ENCODE measurements at regions of chr11 and their contacts with region 1.

Region 1: GRCh38 chr11:86182976-86183584 is 61.5 kb upstream of the EED start:
- DNase-seq: peak; percentile 88
- ATAC-seq: peak; percentile 92
- H3K4me3 ChIP-seq: no peak overlapping the region
- H3K27ac ChIP-seq: no peak overlapping the region
- H3K4me1 ChIP-seq: peaks cover 12% of the 10 kb centered on the region
- H3K27me3 ChIP-seq: no peaks in the 10 kb centered on the region
- CTCF ChIP-seq: no peak
- EP300 ChIP-seq: peak in 1 of 2 experiments; percentile 9; a peak in 1 of 4 replicates
- POLR2A ChIP-seq: no peak
- RAD21 ChIP-seq: no peak

Region 2: GRCh38 chr11:86079421-86079820 is 103.7 kb before region 1 on chr11:
- CTCF ChIA-PET with region 1: no interaction called
- POLR2A ChIA-PET with region 1: no interaction called
- RAD21 ChIA-PET with region 1: no interaction called
- SMC1A ChIA-PET with region 1: no interaction called
- in situ Hi-C with region 1: no loop called
- intact Hi-C with region 1: no loop called
- DNase-seq: no peak
- ATAC-seq: no peak
- H3K4me3 ChIP-seq: no peak overlapping the region
- H3K27ac ChIP-seq: no peak overlapping the region
- H3K4me1 ChIP-seq: no peaks in the 10 kb centered on the region
- H3K27me3 ChIP-seq: no peaks in the 10 kb centered on the region
- CTCF ChIP-seq: no peak
- EP300 ChIP-seq: no peak
- POLR2A ChIP-seq: no peak
- RAD21 ChIP-seq: no peak

Region 3: GRCh38 chr11:86138958-86139357 is 44.1 kb before region 1 on chr11:
- CTCF ChIA-PET with region 1: no interaction called
- POLR2A ChIA-PET with region 1: no interaction called
- RAD21 ChIA-PET with region 1: interaction called, 4 read pairs
- SMC1A ChIA-PET with region 1: interaction called, 4 read pairs
- in situ Hi-C with region 1: no loop called
- intact Hi-C with region 1: loop called (anchors 5 kb)
- DNase-seq: peak; percentile 84
- ATAC-seq: peak; percentile 92
- H3K4me3 ChIP-seq: peak overlapping the region; percentile 55; the same call in 1 of the 2 replicates
- H3K27ac ChIP-seq: peak overlapping the region; percentile 67
- H3K4me1 ChIP-seq: peaks cover 11% of the 10 kb centered on the region; the same call in 1 of the 2 replicates
- H3K27me3 ChIP-seq: no peaks in the 10 kb centered on the region
- CTCF ChIP-seq: no peak
- EP300 ChIP-seq: no peak; a peak in 1 of 4 replicates
- POLR2A ChIP-seq: no peak
- RAD21 ChIP-seq: no peak

Measured in GM12878 (cell line).